BJ (cell line): ENCODE measurements at regions of chr3 and their contacts with region 1.

Region 1: DNA sequence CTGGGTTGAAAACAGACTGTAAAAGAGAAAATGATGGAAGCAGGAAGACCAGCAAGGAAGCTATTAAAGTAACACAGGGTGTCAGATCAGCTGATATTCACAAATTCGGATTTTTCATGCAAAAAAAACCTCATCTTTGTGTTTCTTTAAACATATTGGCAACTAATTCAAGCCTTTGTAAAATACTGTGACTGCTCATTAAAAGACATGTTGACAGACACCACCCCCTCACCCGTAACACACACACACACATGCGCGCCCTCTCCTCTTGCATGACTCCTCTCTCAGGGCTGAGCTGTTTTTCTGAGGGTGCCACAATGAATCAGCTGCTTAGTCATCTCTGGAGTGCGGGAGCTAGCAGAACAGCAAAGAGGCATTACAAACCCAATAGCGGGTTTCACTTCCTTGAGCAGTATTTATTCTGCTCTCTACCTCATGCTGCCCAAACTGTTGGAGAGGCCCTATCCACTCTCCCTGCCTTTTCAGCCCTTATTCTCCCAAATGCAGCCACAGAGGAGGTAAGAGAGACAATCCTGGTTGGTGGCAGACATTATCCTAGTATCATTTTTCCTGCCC is 35.8 kb upstream of the CCDC80 start:
- DNase-seq: peak; percentile 90
- H3K4me3 ChIP-seq: no peak overlapping the region
- H3K27me3 ChIP-seq: no peaks in the 10 kb centered on the region
- CTCF ChIP-seq: no peak

Region 2: DNA sequence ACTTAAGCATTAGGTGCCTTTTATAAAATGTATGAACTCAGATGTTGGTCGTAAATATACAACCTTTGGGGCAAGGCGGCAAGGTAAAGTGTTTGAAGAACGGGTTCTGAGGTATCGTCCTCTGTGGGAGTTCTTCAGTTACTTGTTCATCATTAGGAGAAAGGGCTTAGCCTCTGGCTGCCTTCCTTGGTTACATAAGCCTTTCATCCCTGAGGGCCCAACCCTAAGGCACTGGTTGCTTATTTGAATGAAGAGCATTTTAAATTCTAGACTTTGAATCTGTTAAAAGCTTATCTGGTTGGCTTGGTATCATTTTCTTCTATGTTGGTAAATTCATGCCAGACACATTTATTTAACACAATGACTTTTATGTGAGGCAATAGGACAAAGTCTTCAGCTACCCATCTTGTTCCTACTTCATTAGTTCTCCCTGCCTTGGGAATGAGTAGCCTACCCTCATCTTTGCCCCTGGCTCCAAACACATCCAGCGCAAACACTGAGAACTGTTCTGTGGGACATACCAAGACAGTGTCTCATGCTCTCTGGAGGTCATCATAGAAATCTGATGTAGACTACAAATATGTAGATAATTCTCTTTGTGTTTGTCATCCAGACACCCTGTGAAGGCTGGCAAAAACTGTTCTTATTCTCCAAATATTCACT is 23.4 kb before region 1 on chr3:
- CTCF ChIA-PET with region 1: interaction called, 5 read pairs
- POLR2A ChIA-PET with region 1: interaction called, 12 read pairs
- DNase-seq: peak; percentile 94
- H3K4me3 ChIP-seq: no peak overlapping the region
- H3K27me3 ChIP-seq: no peaks in the 10 kb centered on the region
- CTCF ChIP-seq: no peak

Region 3: DNA sequence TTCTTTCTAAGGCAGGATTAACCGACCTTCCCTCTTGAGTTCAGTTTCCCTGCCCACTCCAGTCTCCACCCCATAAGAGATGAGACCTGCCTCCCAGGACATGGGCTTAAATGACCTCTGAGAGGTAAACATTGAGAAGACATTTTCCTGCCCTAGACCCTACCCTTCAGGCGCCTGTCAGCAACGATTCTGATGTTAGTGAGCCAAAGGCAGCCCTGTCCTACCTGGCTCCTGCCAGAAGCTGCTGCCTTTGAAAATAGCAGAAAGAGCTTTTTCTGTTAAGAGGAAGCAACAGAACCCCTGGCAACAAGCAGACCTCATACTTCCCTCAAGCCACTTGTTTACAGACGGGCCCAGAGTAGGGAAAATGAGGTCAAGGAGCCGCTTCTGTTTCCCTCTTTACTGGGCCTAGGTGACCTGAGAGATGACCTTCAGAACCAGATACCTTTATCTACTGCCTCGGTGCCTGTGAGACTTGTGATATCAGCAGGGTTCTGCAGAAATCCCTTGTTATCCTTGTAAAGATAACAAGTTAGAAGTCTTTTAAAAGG is 118.0 kb after region 1 on chr3:
- CTCF ChIA-PET with region 1: no interaction called
- POLR2A ChIA-PET with region 1: no interaction called
- DNase-seq: no peak
- H3K4me3 ChIP-seq: no peak overlapping the region
- H3K27me3 ChIP-seq: no peaks in the 10 kb centered on the region
- CTCF ChIP-seq: no peak